ENCODE measurements at regions of chr19 and their contacts with region 1.

Region 1: DNA sequence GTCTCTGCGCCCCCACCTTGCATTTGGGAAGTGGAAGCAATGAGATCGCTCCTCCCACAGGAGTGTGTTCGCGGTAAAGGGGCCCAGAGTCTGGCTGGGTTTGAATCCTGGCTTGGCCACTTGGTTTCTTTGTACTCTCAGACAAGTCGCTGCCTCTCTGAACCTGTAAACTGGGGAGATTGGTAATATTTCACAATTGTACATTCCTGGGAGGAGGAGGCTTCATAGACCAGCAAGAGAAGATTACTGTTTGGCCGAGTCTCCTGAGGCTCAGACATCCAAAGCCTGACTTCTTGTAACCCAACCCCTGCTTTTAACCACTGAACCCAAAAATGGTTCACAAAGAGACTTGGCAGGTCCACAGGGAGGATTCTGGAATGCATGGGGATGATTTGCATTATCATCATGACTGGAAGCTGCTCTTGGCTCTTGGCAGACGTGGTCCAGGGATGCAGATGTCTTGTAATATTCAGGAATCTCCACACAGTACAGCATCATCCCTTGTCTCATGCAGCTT is 13.6 kb upstream of the STRN4 start:
- H3K4me3 ChIP-seq: no peak overlapping the region
- H3K27ac ChIP-seq: no peak overlapping the region
- H3K4me1 ChIP-seq: peaks cover 3% of the 10 kb centered on the region
- CTCF ChIP-seq: no peak

Region 2: DNA sequence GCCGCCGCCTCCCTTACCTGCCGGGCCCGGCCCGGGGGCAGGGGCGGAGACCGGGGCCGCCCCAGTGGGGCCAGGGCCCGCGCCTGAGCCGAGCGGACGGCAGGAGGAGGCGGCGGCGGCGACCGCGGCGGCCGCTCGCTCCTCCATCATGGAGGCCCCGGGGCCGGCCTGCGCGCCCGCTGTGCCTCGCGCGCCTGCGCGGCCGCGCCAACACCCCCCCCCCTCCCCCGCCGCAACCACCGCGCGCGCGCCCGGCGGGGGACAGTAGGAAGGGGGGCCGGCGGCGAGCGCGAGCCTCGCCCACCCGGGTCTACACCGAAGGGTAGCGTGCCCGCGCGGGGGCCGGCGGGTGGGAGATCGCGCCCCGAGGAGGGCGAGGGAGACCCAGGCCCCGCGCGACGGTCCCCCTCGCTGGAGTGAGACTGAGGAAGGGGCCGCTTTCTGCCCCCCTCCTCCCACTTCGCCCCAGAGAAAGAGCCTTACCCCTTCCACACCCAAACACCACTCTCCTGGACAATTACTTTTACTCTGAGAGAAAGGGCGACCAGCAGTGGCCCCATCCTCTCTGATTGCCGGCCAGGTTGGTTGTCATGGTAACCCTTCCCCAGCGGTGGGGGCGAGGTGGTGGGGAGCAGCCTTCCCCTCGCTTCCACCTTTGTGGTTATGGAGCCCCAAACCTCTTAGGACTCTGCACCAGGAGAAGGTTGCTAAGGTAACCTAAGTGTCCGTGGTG is 13.4 kb before region 1 on chr19 and contains the start of gene STRN4:
- CTCF ChIA-PET with region 1: interaction called, 18 read pairs
- POLR2A ChIA-PET with region 1: no interaction called
- H3K4me3 ChIP-seq: peak within 1 kb of the TSS; percentile 70
- H3K27ac ChIP-seq: peak within 1 kb of the TSS; percentile 99
- H3K4me1 ChIP-seq: peaks cover 6% of the 10 kb centered on the region
- CTCF ChIP-seq: no peak

Measured in HEK293 (cell line).